ENCODE measurements at regions of chr4 and their contacts with region 1.

Region 1: GRCh38 chr4:110631584-110632505 is 9.0 kb upstream of the PITX2 start:
- DNase-seq: peak; percentile 15
- ATAC-seq: peak; percentile 97
- H3K4me3 ChIP-seq: peak overlapping the region; percentile 17 to 42
- H3K27ac ChIP-seq: no peak overlapping the region
- H3K4me1 ChIP-seq: no peaks in the 10 kb centered on the region
- H3K27me3 ChIP-seq: no peaks in the 10 kb centered on the region
- CTCF ChIP-seq: peak; percentile 80

Region 2: GRCh38 chr4:110620691-110621327 is 11.0 kb before region 1 on chr4:
- CTCF ChIA-PET with region 1: no interaction called
- POLR2A ChIA-PET with region 1: interaction called, 10 read pairs
- in situ Hi-C with region 1: no loop called
- intact Hi-C with region 1: no loop called
- DNase-seq: no peak
- ATAC-seq: no peak
- H3K4me3 ChIP-seq: no peak overlapping the region
- H3K27ac ChIP-seq: no peak overlapping the region
- H3K4me1 ChIP-seq: no peaks in the 10 kb centered on the region
- H3K27me3 ChIP-seq: no peaks in the 10 kb centered on the region
- CTCF ChIP-seq: no peak

Region 3: GRCh38 chr4:110959041-110959643 is 327.3 kb after region 1 on chr4:
- CTCF ChIA-PET with region 1: no interaction called
- POLR2A ChIA-PET with region 1: no interaction called
- in situ Hi-C with region 1: no loop called
- intact Hi-C with region 1: loop called (anchors 5 kb)
- DNase-seq: no peak
- ATAC-seq: no peak
- H3K4me3 ChIP-seq: no peak overlapping the region
- H3K27ac ChIP-seq: no peak overlapping the region
- H3K4me1 ChIP-seq: no peaks in the 10 kb centered on the region
- H3K27me3 ChIP-seq: no peaks in the 10 kb centered on the region
- CTCF ChIP-seq: peak; percentile 16; the same call in 1 of the 2 replicates

Region 4: DNA sequence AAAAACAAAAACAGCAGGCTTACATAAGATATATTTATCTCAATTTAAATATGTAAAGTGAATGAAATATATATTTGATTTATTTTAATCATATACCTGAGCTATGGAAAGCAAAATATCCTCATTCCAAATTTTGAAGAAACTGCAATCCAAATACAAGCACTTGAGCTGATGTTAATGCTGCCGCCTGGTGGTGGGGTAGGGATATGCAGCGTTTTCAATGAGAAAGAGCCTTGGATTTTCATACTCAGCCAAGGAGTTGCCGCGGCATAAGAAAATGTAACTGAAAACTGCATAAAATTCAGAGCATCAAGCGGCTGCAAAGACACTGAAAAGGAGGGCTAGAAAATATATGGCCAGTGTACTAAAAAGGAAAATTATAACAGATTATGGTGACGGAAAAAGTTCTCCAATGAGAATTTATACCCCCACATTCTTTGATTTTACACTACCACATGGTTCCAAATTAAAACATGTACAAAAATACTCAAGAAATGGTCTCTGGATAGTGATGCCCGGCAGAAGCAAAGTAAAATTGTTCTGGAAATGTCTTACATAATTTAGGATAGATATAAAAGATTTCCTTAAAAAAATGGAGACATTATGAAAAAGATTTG is 651.3 kb after region 1 on chr4:
- CTCF ChIA-PET with region 1: no interaction called
- POLR2A ChIA-PET with region 1: no interaction called
- in situ Hi-C with region 1: no loop called
- intact Hi-C with region 1: loop called (anchors 5 kb)
- DNase-seq: peak; percentile 39
- ATAC-seq: no peak
- H3K4me3 ChIP-seq: no peak overlapping the region
- H3K27ac ChIP-seq: no peak overlapping the region
- H3K4me1 ChIP-seq: no peaks in the 10 kb centered on the region
- H3K27me3 ChIP-seq: no peaks in the 10 kb centered on the region
- CTCF ChIP-seq: peak; percentile 85

Region 5: DNA sequence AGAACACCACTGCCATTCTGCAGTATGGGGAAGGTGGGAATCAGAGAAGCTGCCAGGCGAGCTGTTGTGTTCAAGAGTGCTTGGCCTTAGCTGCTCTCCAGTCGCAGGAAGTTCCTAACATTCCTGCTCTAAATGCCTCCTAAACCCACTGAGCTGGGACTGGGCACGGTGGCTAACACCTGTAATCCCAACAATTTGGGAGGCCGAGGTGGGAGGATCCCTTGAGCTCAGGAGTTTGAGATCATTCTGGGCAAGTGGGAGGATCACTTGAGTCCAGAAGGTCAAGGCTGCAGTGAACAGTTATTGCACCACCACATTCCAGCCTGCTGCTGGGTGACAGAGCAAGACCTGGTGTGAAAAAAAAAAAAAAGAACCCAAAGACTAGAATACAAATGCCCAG is 823.1 kb after region 1 on chr4:
- CTCF ChIA-PET with region 1: no interaction called
- POLR2A ChIA-PET with region 1: no interaction called
- in situ Hi-C with region 1: no loop called
- intact Hi-C with region 1: loop called (anchors 5 kb)
- DNase-seq: no peak
- ATAC-seq: no peak
- H3K4me3 ChIP-seq: no peak overlapping the region
- H3K27ac ChIP-seq: no peak overlapping the region
- H3K4me1 ChIP-seq: no peaks in the 10 kb centered on the region
- H3K27me3 ChIP-seq: no peaks in the 10 kb centered on the region
- CTCF ChIP-seq: no peak

Region 6: DNA sequence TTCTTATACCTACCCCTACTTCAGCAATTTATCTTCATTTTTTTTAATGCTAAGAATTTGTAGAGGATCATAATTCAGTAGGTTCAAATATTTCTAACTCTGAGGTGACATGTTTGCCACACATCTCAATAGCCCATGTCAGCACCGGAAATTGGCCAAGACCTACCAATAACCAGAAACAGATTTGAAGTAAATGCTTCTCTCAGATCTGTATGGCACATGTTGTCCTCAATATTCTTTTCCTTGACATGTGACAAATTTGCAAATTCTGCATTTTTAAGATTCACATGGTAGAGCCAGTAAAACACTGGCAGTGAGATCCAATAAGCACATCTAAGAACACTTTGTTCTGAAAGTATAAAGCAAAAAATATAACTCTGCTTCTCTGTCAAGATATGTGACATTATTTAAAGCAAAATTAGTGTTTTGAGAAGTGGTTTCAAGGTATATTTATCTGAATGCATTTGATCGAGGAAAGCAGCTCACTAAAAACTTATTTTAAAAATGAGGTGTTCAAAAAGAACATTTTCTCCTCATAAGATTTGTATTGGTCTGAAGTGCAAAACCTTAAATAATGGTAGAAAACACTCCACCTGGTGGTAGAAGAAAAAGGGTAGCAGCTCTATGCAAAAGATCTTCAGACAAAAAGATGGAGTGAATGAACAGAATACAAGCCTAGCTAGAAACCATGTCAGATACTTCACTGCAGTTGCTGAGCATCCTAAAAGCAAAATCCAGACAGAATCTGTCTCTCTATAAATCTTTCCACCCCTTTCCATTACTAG is 999.6 kb after region 1 on chr4:
- CTCF ChIA-PET with region 1: interaction called, 3 read pairs
- POLR2A ChIA-PET with region 1: no interaction called
- in situ Hi-C with region 1: no loop called
- intact Hi-C with region 1: loop called (anchors 2 kb)
- DNase-seq: no peak
- ATAC-seq: no peak
- H3K4me3 ChIP-seq: no peak overlapping the region
- H3K27ac ChIP-seq: no peak overlapping the region
- H3K4me1 ChIP-seq: no peaks in the 10 kb centered on the region
- H3K27me3 ChIP-seq: no peaks in the 10 kb centered on the region
- CTCF ChIP-seq: peak; percentile 35; the same call in 1 of the 2 replicates